ENCODE measurements at regions of chr10 and their contacts with region 1.

Region 1: DNA sequence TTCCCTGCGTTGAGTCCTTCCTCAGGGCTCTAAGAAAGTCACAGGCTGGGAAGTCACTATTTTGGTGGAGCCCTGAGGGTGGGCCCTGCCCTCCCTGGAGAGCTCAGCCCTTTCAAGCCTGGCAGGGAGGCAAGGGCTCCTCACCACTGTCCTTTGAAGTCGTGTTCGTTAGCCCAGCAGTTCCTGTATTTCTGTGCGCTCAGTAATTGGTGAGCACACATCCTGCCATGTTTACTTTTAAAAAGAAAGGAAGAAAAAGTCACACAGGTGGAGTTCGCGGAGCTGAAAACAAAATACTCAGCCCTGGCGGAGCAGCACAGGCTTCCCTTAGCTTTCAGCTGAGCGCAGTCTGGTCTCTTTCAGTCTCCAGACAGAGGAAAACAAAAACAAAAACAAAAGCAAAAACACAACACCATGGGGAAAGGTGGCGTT is 37.1 kb downstream of the PRKCQ start:
- DNase-seq: no peak
- H3K4me3 Mint-ChIP-seq: peak overlapping the region; percentile 89
- H3K27ac Mint-ChIP-seq: peak overlapping the region; percentile 100
- H3K4me1 Mint-ChIP-seq: peaks cover 65% of the 10 kb centered on the region
- H3K27me3 Mint-ChIP-seq: no peaks in the 10 kb centered on the region

Region 2: GRCh38 chr10:6068422-6068821 is 474.6 kb before region 1 on chr10:
- intact Hi-C with region 1: loop called (anchors 1 kb)
- DNase-seq: peak; percentile 45
- H3K4me3 Mint-ChIP-seq: peak overlapping the region; percentile 85
- H3K27ac Mint-ChIP-seq: peak overlapping the region; percentile 99
- H3K4me1 Mint-ChIP-seq: peaks cover 91% of the 10 kb centered on the region
- H3K27me3 Mint-ChIP-seq: no peaks in the 10 kb centered on the region

Region 3: DNA sequence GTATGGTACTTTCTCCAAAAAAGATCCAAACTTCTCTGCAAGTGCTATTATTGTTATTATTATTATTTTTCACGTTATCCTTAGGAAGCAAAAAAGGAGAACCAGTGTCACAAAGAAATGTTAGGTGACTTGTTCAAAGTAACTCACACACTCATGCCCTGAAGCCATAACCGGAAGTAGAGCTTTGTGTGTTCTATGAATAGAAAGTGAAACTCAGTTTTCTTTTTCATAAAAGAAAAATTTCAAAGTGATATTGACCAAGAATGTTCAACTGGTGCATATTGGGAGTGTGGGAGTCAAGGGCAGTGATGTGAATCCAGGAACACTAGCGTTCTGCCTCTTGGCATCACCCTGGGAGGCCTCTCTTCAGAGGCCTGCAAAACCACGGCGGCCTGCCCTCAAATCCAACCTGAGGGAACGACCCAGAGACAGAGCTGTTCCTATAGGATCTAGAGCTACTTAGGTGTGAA is 69.1 kb before region 1 on chr10:
- intact Hi-C with region 1: loop called (anchors 1 kb)
- DNase-seq: no peak
- H3K4me3 Mint-ChIP-seq: peak overlapping the region; percentile 83
- H3K27ac Mint-ChIP-seq: peak overlapping the region; percentile 95
- H3K4me1 Mint-ChIP-seq: peaks cover 60% of the 10 kb centered on the region
- H3K27me3 Mint-ChIP-seq: no peaks in the 10 kb centered on the region

Region 4: GRCh38 chr10:6507311-6507710 is 35.7 kb before region 1 on chr10:
- intact Hi-C with region 1: loop called (anchors 1 kb)
- DNase-seq: peak; percentile 45
- H3K4me3 Mint-ChIP-seq: peak overlapping the region; percentile 54
- H3K27ac Mint-ChIP-seq: peak overlapping the region; percentile 91
- H3K4me1 Mint-ChIP-seq: peaks cover 55% of the 10 kb centered on the region
- H3K27me3 Mint-ChIP-seq: no peaks in the 10 kb centered on the region

Region 5: GRCh38 chr10:6530211-6530840 is 12.7 kb before region 1 on chr10:
- intact Hi-C with region 1: loop called (anchors 2 kb)
- DNase-seq: peak; percentile 76
- H3K4me3 Mint-ChIP-seq: peak overlapping the region; percentile 80
- H3K27ac Mint-ChIP-seq: peak overlapping the region; percentile 97
- H3K4me1 Mint-ChIP-seq: peaks cover 71% of the 10 kb centered on the region
- H3K27me3 Mint-ChIP-seq: no peaks in the 10 kb centered on the region

Region 6: GRCh38 chr10:6563075-6563474 is 20.1 kb after region 1 on chr10:
- intact Hi-C with region 1: loop called (anchors 1 kb)
- DNase-seq: peak; percentile 44
- H3K4me3 Mint-ChIP-seq: peak overlapping the region; percentile 66
- H3K27ac Mint-ChIP-seq: peak overlapping the region; percentile 80
- H3K4me1 Mint-ChIP-seq: peaks cover 72% of the 10 kb centered on the region
- H3K27me3 Mint-ChIP-seq: no peaks in the 10 kb centered on the region

Region 7: DNA sequence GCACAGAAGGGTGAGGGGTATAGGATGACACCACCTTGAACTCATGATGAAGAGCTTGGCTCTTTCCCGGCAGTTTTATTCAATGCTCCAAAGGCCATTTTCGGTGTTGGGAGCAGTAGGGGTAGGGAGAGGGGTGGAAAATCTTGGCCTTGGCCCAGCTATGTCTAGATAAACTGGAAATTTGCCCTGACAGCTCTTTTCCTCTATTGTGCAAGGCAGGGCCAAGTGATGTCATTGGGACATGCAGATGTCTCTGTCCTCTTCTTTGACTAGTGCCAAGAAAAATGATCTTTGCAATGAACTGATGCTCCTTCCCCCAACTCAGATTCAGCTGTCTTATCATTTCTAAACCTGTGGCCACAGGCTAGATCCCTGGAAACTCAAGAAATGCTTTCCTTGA is 64.8 kb after region 1 on chr10:
- intact Hi-C with region 1: loop called (anchors 1 kb)
- DNase-seq: no peak
- H3K4me3 Mint-ChIP-seq: no peak overlapping the region
- H3K27ac Mint-ChIP-seq: no peak overlapping the region
- H3K4me1 Mint-ChIP-seq: peaks cover 69% of the 10 kb centered on the region
- H3K27me3 Mint-ChIP-seq: no peaks in the 10 kb centered on the region

Measured in activated T-helper 2 cell treated with anti-CD3 and anti-CD28 coated beads, Interferon-gamma antibody, Interleukin-2, Interleukin-4, amounts not matched to agents 10 μg/mL and 5 μg/mL and 100 μg/mL, durations not matched to agents 14 hours and 24 hours and 36 hours (primary cell).